ENCODE measurements at regions of chr16 and their contacts with region 1.

Region 1: GRCh38 chr16:10922328-10923145 is 19.7 kb downstream of the DEXI start:
- DNase-seq: no peak
- H3K4me3 ChIP-seq: no peak overlapping the region
- H3K4me1 ChIP-seq: peaks cover 3% of the 10 kb centered on the region
- H3K27me3 ChIP-seq: no peaks in the 10 kb centered on the region

Region 2: DNA sequence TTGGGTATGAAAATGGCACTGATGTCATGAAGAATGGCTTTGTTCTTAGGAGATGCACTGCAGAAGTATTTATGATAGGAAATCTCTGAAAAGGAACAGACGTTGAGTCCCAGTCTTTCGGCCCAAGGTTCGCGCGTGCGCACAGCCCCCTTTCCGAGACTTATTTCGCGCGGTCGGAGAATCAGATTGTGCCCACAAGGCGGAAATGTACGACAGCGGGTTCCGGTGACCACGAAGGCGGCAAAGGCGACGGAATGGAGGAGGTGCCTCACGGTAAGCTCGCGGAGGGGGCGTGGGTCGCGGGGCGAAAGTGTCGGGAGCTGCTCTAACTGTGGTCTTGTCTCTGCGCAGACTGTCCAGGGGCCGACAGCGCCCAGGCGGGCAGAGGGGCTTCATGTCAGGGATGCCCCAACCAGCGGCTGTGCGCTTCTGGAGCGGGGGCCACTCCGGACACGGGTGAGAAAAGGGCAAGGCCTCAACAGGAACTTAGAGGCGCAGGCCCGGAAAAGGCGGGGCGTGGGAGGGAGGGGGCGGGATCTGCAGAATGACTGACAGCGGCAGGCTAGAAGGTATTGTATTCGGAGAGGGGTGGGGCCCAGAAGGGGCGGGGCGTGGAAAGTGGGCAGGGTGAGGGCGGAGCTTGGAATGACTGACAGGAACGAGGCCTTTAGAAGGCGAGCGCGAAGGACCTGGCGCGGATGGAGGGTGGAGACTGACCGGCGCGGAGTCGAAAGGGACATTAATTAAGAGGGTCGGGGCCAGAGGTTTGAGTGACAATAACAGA is 178.7 kb before region 1 on chr16 and contains the start of gene NUBP1:
- in situ Hi-C with region 1: loop called (anchors 10 kb)
- DNase-seq: peak; percentile 86 to 98
- H3K4me3 ChIP-seq: peak within 1 kb of the TSS; percentile 71
- H3K4me1 ChIP-seq: peaks cover 10% of the 10 kb centered on the region
- H3K27me3 ChIP-seq: no peaks in the 10 kb centered on the region